ENCODE measurements at regions of chr14 and their contacts with region 1.

Region 1: DNA sequence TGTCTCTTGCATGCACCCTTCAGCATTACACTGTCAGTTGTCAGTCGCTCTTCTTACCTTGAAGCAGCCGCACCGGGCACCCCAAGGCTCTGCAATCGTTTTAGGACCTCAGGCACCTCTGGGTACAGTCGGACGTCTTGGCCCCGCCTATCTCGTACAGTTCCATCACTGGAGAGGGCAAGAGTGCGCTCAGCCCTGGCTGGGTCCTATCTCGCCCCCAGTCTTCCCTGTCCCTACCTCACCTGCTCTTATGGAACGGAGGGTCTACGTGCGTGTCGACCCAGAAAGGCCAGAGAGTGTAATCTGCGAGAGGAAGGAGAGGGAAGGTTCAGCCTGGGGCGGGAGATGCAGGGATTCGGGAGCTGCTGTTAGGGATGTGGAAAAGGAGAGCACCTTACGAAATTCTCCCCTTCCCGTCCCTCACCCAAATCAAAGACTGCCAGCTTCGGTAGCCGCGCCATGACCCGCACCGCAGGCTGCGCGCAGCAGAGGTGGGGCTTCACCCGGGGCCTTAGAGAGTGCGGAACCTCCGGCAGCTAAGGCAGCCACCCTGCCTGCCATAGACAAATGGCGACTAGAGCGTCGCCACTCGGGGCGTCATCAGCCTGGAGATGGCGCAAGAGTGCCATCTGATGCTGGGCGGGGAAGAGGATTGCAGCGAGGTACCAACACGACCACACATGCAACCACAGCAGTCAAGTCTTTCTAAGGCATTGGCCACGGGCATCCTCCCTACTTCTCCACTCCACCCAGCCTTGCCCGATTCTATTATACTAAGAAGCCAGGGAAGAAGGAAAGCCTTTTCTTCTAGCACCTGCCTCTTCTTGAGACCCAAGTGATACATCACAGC is at the start of gene MDP1:
- DNase-seq: peak; percentile 71
- ATAC-seq: peak; percentile 75
- H3K4me3 Mint-ChIP-seq: peak within 1 kb of the TSS; percentile 93
- H3K27ac Mint-ChIP-seq: peak within 1 kb of the TSS; percentile 95
- H3K4me1 Mint-ChIP-seq: peaks cover 50% of the 10 kb centered on the region
- H3K27me3 Mint-ChIP-seq: no peaks in the 10 kb centered on the region
- CTCF ChIP-seq: no peak
- total RNA-seq, gene MDP1: 12.7 and 16.3 TPM in 2 replicates

Region 2: DNA sequence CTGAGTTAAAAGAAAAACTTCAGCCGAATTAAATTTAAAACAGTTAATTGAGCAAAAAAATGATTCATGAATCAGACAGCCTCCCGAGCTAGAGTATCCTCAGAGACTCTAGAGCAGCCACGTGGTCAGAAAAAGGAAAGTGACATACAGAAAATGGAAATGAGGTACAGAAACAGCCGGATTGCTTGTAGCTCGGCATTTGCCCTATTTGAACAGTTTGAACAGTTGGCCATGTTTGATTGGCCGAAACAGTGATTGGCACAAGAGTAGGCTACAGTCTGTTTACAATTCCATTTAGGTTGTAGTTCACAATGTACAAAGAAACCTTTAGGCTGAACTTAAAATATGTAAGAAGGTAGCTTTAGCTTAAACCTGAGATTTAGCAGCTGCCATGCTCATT is 1462.1 kb before region 1 on chr14:
- CTCF ChIA-PET with region 1: no interaction called
- POLR2A ChIA-PET with region 1: no interaction called
- intact Hi-C with region 1: no loop called
- DNase-seq: no peak
- ATAC-seq: peak; percentile 48
- H3K4me3 Mint-ChIP-seq: no peak overlapping the region
- H3K27ac Mint-ChIP-seq: no peak overlapping the region
- H3K4me1 Mint-ChIP-seq: peaks cover 14% of the 10 kb centered on the region
- H3K27me3 Mint-ChIP-seq: no peaks in the 10 kb centered on the region
- CTCF ChIP-seq: no peak

Region 3: GRCh38 chr14:24141097-24141880 is 74.4 kb before region 1 on chr14 and contains the start of gene EMC9:
- CTCF ChIA-PET with region 1: interaction called, 3 read pairs
- POLR2A ChIA-PET with region 1: interaction called, 25 read pairs
- intact Hi-C with region 1: loop called (anchors 1 kb)
- DNase-seq: peak; percentile 92
- ATAC-seq: peak; percentile 90
- H3K4me3 Mint-ChIP-seq: peak within 1 kb of the TSS; percentile 83
- H3K27ac Mint-ChIP-seq: peak within 1 kb of the TSS; percentile 87
- H3K4me1 Mint-ChIP-seq: peaks cover 78% of the 10 kb centered on the region
- H3K27me3 Mint-ChIP-seq: no peaks in the 10 kb centered on the region
- CTCF ChIP-seq: no peak
- total RNA-seq, gene EMC9: 22.5 and 22.6 TPM in 2 replicates

Region 4: DNA sequence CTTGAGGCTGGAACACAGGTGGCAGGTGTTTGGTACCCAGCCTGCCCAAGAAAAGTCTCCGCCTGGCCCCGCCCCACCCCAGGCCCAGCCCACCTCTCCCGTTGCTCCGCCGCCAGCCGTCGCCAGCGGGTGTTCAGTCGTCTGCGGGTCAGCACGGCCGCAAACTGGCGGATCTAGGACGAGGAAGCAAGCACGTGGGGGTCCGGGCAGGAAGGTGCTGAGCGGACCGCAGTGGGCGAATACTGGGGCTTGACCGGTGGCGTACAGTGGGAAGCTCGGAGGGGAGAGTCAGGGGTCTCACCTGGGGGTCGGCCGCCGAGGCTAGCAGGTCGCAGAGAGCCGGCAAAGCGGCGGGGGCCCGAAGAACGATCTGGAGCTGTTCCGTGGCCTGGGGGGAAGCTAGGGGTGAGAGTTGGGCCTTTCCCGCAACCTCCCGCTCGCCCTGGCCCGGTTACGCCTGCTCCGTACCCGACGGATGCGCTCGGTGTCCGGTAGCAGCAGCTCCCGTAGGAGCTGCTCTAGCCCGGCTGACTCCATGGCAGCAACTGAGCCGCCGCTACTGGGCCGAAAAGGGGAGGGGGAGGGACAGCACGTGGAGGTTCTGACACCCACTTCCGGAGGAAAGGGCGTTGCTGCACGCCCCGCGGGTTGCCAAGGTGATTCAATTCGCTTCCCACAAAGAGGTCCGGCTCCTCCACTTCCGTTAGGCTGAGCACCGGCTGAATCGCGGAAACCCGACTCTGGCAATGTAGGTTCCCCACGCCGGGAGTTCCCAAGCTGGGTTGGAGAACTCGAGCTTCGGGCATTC is 27.3 kb before region 1 on chr14 and contains the start of gene IPO4:
- CTCF ChIA-PET with region 1: interaction called, 3 read pairs
- POLR2A ChIA-PET with region 1: interaction called, 143 read pairs
- intact Hi-C with region 1: loop called (anchors 1 kb)
- DNase-seq: peak; percentile 81
- ATAC-seq: peak; percentile 92
- H3K4me3 Mint-ChIP-seq: peak within 1 kb of the TSS; percentile 91
- H3K27ac Mint-ChIP-seq: peak within 1 kb of the TSS; percentile 87
- H3K4me1 Mint-ChIP-seq: peaks cover 32% of the 10 kb centered on the region
- H3K27me3 Mint-ChIP-seq: no peaks in the 10 kb centered on the region
- CTCF ChIP-seq: no peak
- total RNA-seq, gene IPO4: 76.4 and 80.3 TPM in 2 replicates

Region 5: DNA sequence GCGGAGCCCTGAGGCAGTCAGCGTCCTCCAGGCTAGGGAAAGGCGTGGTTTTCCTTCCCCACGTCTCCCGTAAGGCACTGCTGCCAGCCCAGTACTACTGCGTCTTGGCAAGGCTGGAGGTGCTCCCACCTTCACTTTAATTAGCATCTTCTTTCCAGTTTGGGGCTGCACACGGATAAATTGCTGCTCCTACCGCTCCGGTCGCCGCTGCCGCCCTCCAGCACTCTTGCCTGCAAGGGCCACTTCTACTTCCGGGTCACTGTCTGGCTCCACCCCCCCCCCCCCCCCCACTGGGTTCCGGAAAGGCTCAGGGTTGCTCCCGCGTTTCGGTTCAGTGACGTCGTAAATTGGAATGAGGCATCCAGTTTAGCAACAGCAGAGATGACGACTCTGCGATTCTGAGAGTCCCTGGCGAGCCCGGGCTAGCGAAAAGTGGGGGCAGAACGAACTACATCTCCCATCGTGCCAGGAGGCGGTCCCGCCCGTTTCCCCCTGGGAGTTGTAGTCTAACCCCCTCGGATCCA is 16.5 kb after region 1 on chr14 and contains the start of gene NEDD8:
- CTCF ChIA-PET with region 1: interaction called, 6 read pairs
- POLR2A ChIA-PET with region 1: interaction called, 18 read pairs
- intact Hi-C with region 1: loop called (anchors 1 kb)
- DNase-seq: no peak
- ATAC-seq: peak; percentile 88
- H3K4me3 Mint-ChIP-seq: peak within 1 kb of the TSS; percentile 99
- H3K27ac Mint-ChIP-seq: peak within 1 kb of the TSS; percentile 94
- H3K4me1 Mint-ChIP-seq: peaks cover 43% of the 10 kb centered on the region
- H3K27me3 Mint-ChIP-seq: no peaks in the 10 kb centered on the region
- CTCF ChIP-seq: no peak
- total RNA-seq, gene NEDD8: 129 and 149 TPM in 2 replicates

Region 6: GRCh38 chr14:24279301-24280186 is 63.8 kb after region 1 on chr14:
- CTCF ChIA-PET with region 1: no interaction called
- POLR2A ChIA-PET with region 1: interaction called, 10 read pairs
- intact Hi-C with region 1: no loop called
- DNase-seq: peak; percentile 54
- ATAC-seq: peak; percentile 89
- H3K4me3 Mint-ChIP-seq: peak overlapping the region; percentile 63
- H3K27ac Mint-ChIP-seq: peak overlapping the region; percentile 90
- H3K4me1 Mint-ChIP-seq: peaks cover 73% of the 10 kb centered on the region
- H3K27me3 Mint-ChIP-seq: no peaks in the 10 kb centered on the region
- CTCF ChIP-seq: no peak

Region 7: GRCh38 chr14:24332268-24332993 is 116.7 kb after region 1 on chr14:
- CTCF ChIA-PET with region 1: interaction called, 4 read pairs
- POLR2A ChIA-PET with region 1: interaction called, 4 read pairs
- intact Hi-C with region 1: loop called (anchors 1 kb)
- DNase-seq: peak; percentile 63
- ATAC-seq: peak; percentile 95
- H3K4me3 Mint-ChIP-seq: peak overlapping the region; percentile 83
- H3K27ac Mint-ChIP-seq: peak overlapping the region; percentile 42
- H3K4me1 Mint-ChIP-seq: peaks cover 39% of the 10 kb centered on the region
- H3K27me3 Mint-ChIP-seq: peaks cover 14% of the 10 kb centered on the region
- CTCF ChIP-seq: no peak